ENCODE measurements at regions of chr1 and their contacts with region 1.

Region 1: GRCh38 chr1:103514920-103515503 is 10.5 kb upstream of the RNPC3 start:
- DNase-seq: peak in 1 of 2 donors; percentile 72
- ATAC-seq: peak; percentile 71 to 96 (median 89)
- H3K4me3 ChIP-seq: no peak overlapping the region
- H3K4me3 Mint-ChIP-seq: no peak overlapping the region
- H3K27ac ChIP-seq: no peak overlapping the region
- H3K27ac Mint-ChIP-seq: no peak overlapping the region
- H3K4me1 ChIP-seq: no peaks in the 10 kb centered on the region
- H3K4me1 Mint-ChIP-seq: no peaks in the 10 kb centered on the region
- H3K27me3 ChIP-seq: no peaks in the 10 kb centered on the region
- H3K27me3 Mint-ChIP-seq: no peaks in the 10 kb centered on the region
- CTCF ChIP-seq: peak; percentile 77

Region 2: GRCh38 chr1:101520302-101520701 is 1994.7 kb before region 1 on chr1:
- intact Hi-C with region 1: loop called (anchors 2 kb)
- DNase-seq: peak in 1 of 2 donors; percentile 63
- ATAC-seq: peak; percentile 61 to 70 (median 62)
- H3K4me3 ChIP-seq: no peak overlapping the region
- H3K4me3 Mint-ChIP-seq: no peak overlapping the region
- H3K27ac ChIP-seq: no peak overlapping the region
- H3K27ac Mint-ChIP-seq: no peak overlapping the region
- H3K4me1 ChIP-seq: no peaks in the 10 kb centered on the region
- H3K4me1 Mint-ChIP-seq: peaks cover 8% of the 10 kb centered on the region in 2 donors
- H3K27me3 ChIP-seq: no peaks in the 10 kb centered on the region
- H3K27me3 Mint-ChIP-seq: peaks cover 6 to 13% of the 10 kb centered on the region in 2 donors
- CTCF ChIP-seq: peak; percentile 75

Region 3: GRCh38 chr1:104726917-104727316 is 1211.9 kb after region 1 on chr1:
- intact Hi-C with region 1: no loop called
- DNase-seq: no peak
- ATAC-seq: no peak
- H3K4me3 ChIP-seq: no peak overlapping the region
- H3K4me3 Mint-ChIP-seq: no peak overlapping the region
- H3K27ac ChIP-seq: no peak overlapping the region
- H3K27ac Mint-ChIP-seq: no peak overlapping the region
- H3K4me1 ChIP-seq: no peaks in the 10 kb centered on the region
- H3K4me1 Mint-ChIP-seq: no peaks in the 10 kb centered on the region
- H3K27me3 ChIP-seq: no peaks in the 10 kb centered on the region
- H3K27me3 Mint-ChIP-seq: no peaks in the 10 kb centered on the region
- CTCF ChIP-seq: no peak